HepG2 (cell line): ENCODE measurements at regions of chr3 and their contacts with region 1.

Region 1: GRCh38 chr3:50235716-50236496 is at the start of gene GNAI2:
- DNase-seq: peak; percentile 94
- ATAC-seq: peak; percentile 93
- H3K4me3 ChIP-seq: peak within 1 kb of the TSS; percentile 85 to 93 (median 87)
- H3K27ac ChIP-seq: peak within 1 kb of the TSS; percentile 61
- H3K4me1 ChIP-seq: peaks cover 59% of the 10 kb centered on the region
- H3K27me3 ChIP-seq: no peaks in the 10 kb centered on the region; a peak in 1 of 5 replicates
- CTCF ChIP-seq: no peak; the same call in 1 of the 2 replicates
- EP300 ChIP-seq: no peak
- POLR2A ChIP-seq: peak; percentile 66 to 92
- RAD21 ChIP-seq: peak; percentile 51
- total RNA-seq, gene GNAI2: 34.5 and 51.1 TPM in 2 replicates

Region 2: DNA sequence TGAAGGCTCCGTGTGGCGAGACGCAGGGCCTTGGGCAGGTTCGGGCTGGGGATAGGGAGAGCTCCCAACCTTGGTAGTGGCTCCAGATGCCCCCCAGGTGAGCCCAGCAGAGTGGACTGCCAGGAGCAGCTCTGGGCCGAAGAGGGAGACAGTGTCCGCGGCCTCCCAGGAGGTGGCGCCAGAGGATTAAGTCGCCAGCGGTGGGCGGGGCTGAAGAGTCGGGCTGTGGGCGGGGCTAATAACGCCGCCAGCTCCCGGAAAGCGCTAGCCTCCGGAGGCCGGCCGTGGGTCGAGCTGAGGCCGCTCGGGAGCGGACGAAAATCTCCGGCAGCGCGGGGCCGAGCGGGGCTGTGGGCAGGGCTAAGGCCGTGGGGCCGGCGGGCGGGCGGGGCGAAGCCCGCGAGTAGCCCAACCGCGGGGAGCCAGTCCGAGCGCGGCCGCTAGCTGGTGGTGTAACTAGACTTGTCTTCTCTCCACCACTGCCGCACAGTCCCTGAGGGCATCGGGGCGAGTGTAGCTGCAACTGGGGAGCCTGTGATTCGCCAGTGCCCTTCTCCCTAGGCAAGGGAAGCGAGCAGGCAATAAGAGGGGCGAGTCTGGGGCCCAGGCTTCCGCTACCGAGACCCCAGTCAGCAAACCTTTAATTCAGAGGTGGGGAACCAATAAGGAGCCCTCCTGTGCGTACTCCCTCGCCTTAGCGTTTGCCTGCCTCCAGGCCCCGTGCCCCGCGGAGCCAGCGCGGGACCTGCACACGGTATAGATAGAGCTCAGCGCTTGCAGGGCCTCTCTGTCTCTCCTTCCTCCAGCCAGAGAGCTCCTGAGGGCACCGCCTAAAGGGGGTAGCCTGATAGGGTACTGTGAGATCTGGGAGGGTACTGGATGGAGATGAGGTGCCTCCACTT is 696.0 kb before region 1 on chr3:
- CTCF ChIA-PET with region 1: no interaction called
- POLR2A ChIA-PET with region 1: no interaction called
- in situ Hi-C with region 1: no loop called
- intact Hi-C with region 1: no loop called
- DNase-seq: peak; percentile 85
- ATAC-seq: peak; percentile 94
- H3K4me3 ChIP-seq: peak overlapping the region; percentile 55 to 78 (median 59)
- H3K27ac ChIP-seq: peak overlapping the region; percentile 70
- H3K4me1 ChIP-seq: peaks cover 42% of the 10 kb centered on the region
- H3K27me3 ChIP-seq: 0 out of 5 replicates have a peak, but pooled peaks cover 0 to 3% of the 10 kb centered on the region in 2 experiments
- CTCF ChIP-seq: peak; percentile 96
- EP300 ChIP-seq: no peak
- POLR2A ChIP-seq: peak; percentile 81 to 84
- RAD21 ChIP-seq: peak; percentile 98

Region 3: GRCh38 chr3:50221411-50222168 is 14.3 kb before region 1 on chr3:
- CTCF ChIA-PET with region 1: no interaction called
- POLR2A ChIA-PET with region 1: interaction called, 14 read pairs
- in situ Hi-C with region 1: no loop called
- intact Hi-C with region 1: no loop called
- DNase-seq: peak; percentile 77
- ATAC-seq: peak; percentile 81
- H3K4me3 ChIP-seq: peak overlapping the region in 1 of 3 experiments; percentile 37; a peak in 2 of 6 replicates
- H3K27ac ChIP-seq: peak overlapping the region; percentile 81
- H3K4me1 ChIP-seq: peaks cover 60% of the 10 kb centered on the region
- H3K27me3 ChIP-seq: no peaks in the 10 kb centered on the region
- CTCF ChIP-seq: peak; percentile 93
- EP300 ChIP-seq: 0 out of 4 replicates have a peak, but pooled peaks of 1 of the 2 experiments have one; percentile 20
- POLR2A ChIP-seq: no peak; a peak in 1 of 4 replicates
- RAD21 ChIP-seq: peak; percentile 93

Region 4: GRCh38 chr3:50245831-50246516 is 10.1 kb after region 1 on chr3:
- CTCF ChIA-PET with region 1: no interaction called
- POLR2A ChIA-PET with region 1: interaction called, 14 read pairs
- in situ Hi-C with region 1: no loop called
- intact Hi-C with region 1: no loop called
- DNase-seq: no peak
- ATAC-seq: peak; percentile 91
- H3K4me3 ChIP-seq: peak overlapping the region; percentile 18 to 67 (median 51); a peak in 5 of 6 replicates
- H3K27ac ChIP-seq: peak overlapping the region; percentile 43
- H3K4me1 ChIP-seq: peaks cover 20% of the 10 kb centered on the region
- H3K27me3 ChIP-seq: no peaks in the 10 kb centered on the region
- CTCF ChIP-seq: peak; percentile 98
- EP300 ChIP-seq: no peak
- POLR2A ChIP-seq: no peak
- RAD21 ChIP-seq: peak; percentile 91

Region 5: GRCh38 chr3:50251220-50251619 is 15.3 kb after region 1 on chr3:
- CTCF ChIA-PET with region 1: no interaction called
- POLR2A ChIA-PET with region 1: interaction called, 14 read pairs
- in situ Hi-C with region 1: no loop called
- intact Hi-C with region 1: no loop called
- DNase-seq: no peak
- ATAC-seq: no peak
- H3K4me3 ChIP-seq: no peak overlapping the region
- H3K27ac ChIP-seq: no peak overlapping the region
- H3K4me1 ChIP-seq: peaks cover 16% of the 10 kb centered on the region
- H3K27me3 ChIP-seq: no peaks in the 10 kb centered on the region
- CTCF ChIP-seq: no peak
- EP300 ChIP-seq: no peak
- POLR2A ChIP-seq: no peak
- RAD21 ChIP-seq: no peak

Region 6: DNA sequence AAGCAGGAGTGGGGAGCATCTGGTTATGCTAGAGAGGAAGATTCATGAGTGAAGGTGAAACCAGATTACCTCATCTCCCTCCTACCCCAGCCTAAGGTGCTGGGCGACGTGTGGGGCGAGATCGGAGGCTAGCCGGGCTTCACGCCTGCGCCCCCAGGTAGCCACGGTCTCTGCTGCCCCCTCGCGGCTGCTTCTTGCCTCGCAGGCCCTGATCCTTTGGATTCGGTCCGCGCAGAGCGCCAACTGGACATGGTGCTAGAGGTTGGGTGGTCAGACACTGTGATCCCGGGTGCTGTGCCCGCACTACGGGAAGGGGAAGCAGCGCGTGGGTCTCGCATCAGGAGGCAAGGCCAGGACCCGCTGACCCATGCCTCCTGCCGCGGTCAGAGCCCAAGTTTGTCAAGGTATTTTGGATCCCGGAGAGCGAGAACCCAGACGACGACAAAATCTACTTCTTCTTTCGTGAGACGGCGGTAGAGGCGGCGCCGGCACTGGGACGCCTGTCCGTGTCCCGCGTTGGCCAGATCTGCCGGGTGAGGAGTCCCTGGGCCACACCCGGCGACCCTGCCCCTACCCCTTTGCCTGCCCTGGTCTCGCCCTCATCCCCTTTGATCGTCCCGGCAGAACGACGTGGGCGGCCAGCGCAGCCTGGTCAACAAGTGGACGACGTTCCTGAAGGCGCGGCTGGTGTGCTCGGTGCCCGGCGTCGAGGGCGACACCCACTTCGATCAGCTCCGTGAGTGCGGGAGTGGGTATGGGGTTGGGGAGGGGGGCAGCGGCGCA is 37.2 kb after region 1 on chr3:
- CTCF ChIA-PET with region 1: no interaction called
- POLR2A ChIA-PET with region 1: interaction called, 30 read pairs
- in situ Hi-C with region 1: no loop called
- intact Hi-C with region 1: no loop called
- DNase-seq: peak; percentile 64
- ATAC-seq: peak; percentile 13
- H3K4me3 ChIP-seq: no peak overlapping the region
- H3K27ac ChIP-seq: peak overlapping the region; percentile 88
- H3K4me1 ChIP-seq: peaks cover 54% of the 10 kb centered on the region
- H3K27me3 ChIP-seq: no peaks in the 10 kb centered on the region; a peak in 1 of 5 replicates
- CTCF ChIP-seq: peak; percentile 99
- EP300 ChIP-seq: 0 out of 4 replicates have a peak, but pooled peaks of 1 of the 2 experiments have one; percentile 26
- POLR2A ChIP-seq: no peak
- RAD21 ChIP-seq: peak; percentile 99